Breast epithelium (tissue), 4 donors: ENCODE measurements at regions of chr13 and their contacts with region 1.

Region 1: GRCh38 chr13:70473907-70474306 is 365.7 kb upstream of the KLHL1 start:
- DNase-seq: no peak
- H3K4me3 ChIP-seq: no peak overlapping the region
- H3K27ac ChIP-seq: no peak overlapping the region
- H3K4me1 ChIP-seq: no peaks in the 10 kb centered on the region
- H3K27me3 ChIP-seq: no peaks in the 10 kb centered on the region
- CTCF ChIP-seq: no peak
- POLR2A ChIP-seq: no peak

Region 2: DNA sequence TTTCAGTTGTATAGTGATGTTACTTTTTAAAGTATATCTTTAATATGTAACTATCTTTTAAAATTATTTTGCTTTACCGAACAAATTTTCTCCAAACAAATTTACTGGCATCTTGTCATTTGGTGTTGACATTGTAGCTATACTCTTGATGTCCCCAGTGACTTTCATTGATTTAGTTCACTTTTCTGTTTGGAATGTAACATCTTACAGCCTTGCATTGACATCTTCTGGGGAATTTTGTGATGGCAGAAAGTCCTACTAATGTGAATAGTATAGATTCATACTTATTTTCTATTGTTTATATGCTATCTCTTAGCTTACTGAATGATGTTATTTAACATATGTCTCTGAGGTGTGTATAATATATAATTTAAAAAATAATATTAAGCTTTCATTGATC is 1167.1 kb before region 1 on chr13:
- intact Hi-C with region 1: loop called (anchors 10 kb)
- DNase-seq: no peak
- H3K4me3 ChIP-seq: no peak overlapping the region
- H3K27ac ChIP-seq: no peak overlapping the region
- H3K4me1 ChIP-seq: no peaks in the 10 kb centered on the region
- H3K27me3 ChIP-seq: no peaks in the 10 kb centered on the region
- CTCF ChIP-seq: no peak
- POLR2A ChIP-seq: no peak

Region 3: GRCh38 chr13:70490320-70490935 is 16.5 kb after region 1 on chr13:
- intact Hi-C with region 1: loop called (anchors 2 kb)
- DNase-seq: no peak
- H3K4me3 ChIP-seq: no peak overlapping the region
- H3K27ac ChIP-seq: no peak overlapping the region
- H3K4me1 ChIP-seq: no peaks in the 10 kb centered on the region
- H3K27me3 ChIP-seq: no peaks in the 10 kb centered on the region
- CTCF ChIP-seq: no peak
- POLR2A ChIP-seq: no peak